ENCODE measurements at regions of chr16 and their contacts with region 1.

Region 1: DNA sequence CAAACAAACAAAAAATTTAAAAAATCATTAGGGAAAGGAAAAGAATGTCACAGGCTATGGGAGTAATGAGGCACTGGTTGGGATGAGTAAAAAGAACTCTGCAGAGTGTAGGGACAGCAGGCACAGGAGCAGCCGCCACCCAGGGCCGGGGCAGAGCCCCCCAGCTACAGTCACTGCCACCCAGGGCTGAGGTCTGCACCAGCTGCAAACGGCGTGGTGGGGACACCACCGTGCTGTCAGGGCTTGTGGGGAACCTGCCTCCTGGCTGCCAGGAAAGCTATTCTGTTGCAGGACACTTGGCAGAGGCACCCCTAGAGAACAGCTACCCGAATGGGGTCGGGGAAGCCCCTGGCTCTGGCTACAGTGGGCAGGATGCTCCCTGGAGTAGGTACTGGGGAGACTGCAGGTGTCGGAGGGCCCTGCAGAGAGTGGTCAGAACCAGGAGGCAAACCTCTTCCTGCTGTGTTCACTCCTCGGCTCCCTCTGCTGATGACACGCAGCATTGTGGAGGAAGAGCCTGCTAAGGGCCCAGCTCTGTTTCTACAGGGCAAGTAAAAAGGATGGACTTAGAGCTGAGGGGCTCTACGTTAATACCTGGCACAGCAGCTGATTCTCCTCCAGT is 32.3 kb upstream of the CAPN15 start:
- DNase-seq: peak in 1 of 7 donors; percentile 33
- H3K4me3 ChIP-seq: no peak overlapping the region
- H3K27ac ChIP-seq: no peak overlapping the region
- H3K4me1 ChIP-seq: no peaks in the 10 kb centered on the region
- H3K27me3 ChIP-seq: no peaks in the 10 kb centered on the region
- CTCF ChIP-seq: peak in 2 of 6 experiments; percentile 22 to 35
- POLR2A ChIP-seq: no peak

Region 2: DNA sequence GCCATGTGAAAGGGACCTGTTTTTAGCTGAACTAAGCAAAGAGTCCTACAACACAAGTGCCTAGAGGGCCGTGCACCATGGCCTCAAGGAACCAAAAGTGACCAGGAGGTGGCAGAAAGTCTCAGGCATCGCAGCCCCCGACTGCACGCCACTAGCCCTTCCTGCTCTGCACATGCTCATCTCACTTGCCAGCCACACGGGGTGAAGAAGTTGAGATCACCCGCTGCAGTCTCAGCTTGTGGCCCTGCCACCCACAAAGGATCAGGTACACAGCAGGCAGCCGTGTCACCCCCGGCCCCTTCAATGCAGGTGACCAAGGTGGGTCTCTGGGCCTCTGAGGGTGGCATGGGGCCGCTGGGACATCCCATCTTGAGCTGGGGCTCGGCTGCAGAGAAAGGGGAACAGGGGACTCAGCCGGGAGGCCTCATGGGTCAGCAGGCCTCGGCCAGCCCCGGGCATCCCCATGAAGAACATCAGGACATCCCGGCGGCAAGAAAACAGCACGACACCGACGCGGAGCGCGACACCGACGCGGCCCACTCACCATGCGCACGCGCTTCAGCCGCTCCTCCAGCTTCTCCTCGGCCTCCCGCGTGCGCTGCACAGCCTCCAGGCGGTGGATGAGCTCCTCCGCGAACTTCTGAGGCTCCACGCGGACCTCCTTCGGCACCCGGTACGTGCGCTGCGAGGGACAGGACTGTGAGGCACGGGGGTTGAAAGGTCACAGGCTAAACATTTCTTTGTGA is 191.3 kb before region 1 on chr16:
- intact Hi-C with region 1: loop called in 1 of 2 experiments (anchors 10 kb)
- DNase-seq: peak in 1 of 7 donors; percentile 16
- H3K4me3 ChIP-seq: no peak overlapping the region
- H3K27ac ChIP-seq: no peak overlapping the region
- H3K4me1 ChIP-seq: peaks cover 0 to 8% of the 10 kb centered on the region in 2 donors
- H3K27me3 ChIP-seq: no peaks in the 10 kb centered on the region
- CTCF ChIP-seq: no peak
- POLR2A ChIP-seq: no peak

Region 3: GRCh38 chr16:569445-570254 is 74.4 kb after region 1 on chr16 and contains the start of gene PIGQ:
- intact Hi-C with region 1: no loop called
- DNase-seq: peak; percentile 78 to 92 (median 87)
- H3K4me3 ChIP-seq: peak within 1 kb of the TSS; percentile 37 to 99 (median 81)
- H3K27ac ChIP-seq: peak within 1 kb of the TSS; percentile 60 to 88 (median 78)
- H3K4me1 ChIP-seq: peaks cover 31 to 43% of the 10 kb centered on the region in 2 donors
- H3K27me3 ChIP-seq: no peaks in the 10 kb centered on the region
- CTCF ChIP-seq: no peak
- POLR2A ChIP-seq: no peak
- total RNA-seq, gene PIGQ: 21.1 to 107 (median 78.5) TPM

Measured in adrenal gland (tissue), 19 donors.